H1 (cell line): ENCODE measurements at regions of chr6 and their contacts with region 1.

Region 1: DNA sequence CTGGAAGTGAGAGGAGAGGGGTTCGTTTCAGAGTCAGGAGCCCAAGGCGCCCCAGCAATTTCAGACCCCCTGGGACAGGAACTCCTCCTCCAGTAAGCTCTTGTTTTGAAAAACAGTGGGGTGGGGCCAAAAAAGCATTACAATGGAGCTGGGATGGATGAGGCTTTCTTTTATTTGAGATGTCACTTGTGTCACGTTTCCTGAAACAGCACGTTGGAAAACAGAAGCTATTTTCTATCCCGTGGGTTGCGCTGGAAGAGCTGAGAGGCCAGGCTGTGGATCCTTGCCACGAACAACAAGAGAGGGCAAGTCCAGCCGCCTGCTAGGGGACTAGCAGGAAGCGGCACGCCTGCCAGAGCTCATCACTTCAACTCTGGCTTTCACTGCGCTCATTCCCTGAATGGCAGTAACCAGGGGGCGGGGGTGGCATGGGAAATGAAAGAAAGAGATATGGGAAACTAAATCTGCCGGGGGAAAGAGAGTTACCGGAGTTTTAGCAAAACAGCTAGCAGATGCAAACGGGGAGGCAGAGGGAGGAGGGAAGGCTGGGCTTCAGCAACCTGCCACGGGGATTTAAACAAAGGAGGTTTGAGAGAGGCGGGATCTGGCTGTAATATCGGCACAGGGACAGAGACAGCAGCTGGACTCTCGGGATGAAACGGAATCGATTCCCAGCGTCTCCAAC is 34.6 kb downstream of the GCNT2 start:
- DNase-seq: peak; percentile 56 to 70
- H3K4me3 ChIP-seq: peak overlapping the region; percentile 81 to 96 (median 87)
- H3K27ac ChIP-seq: peak overlapping the region; percentile 83
- H3K4me1 ChIP-seq: peaks cover 2 to 12% (median 5%) of the 10 kb centered on the region in 4 experiments; a peak in 6 of 7 replicates
- H3K27me3 ChIP-seq: no peaks in the 10 kb centered on the region
- CTCF ChIP-seq: no peak
- EP300 ChIP-seq: no peak
- POLR2A ChIP-seq: peak; percentile 7 to 69; a peak in 2 of 3 replicates
- RAD21 ChIP-seq: no peak

Region 2: DNA sequence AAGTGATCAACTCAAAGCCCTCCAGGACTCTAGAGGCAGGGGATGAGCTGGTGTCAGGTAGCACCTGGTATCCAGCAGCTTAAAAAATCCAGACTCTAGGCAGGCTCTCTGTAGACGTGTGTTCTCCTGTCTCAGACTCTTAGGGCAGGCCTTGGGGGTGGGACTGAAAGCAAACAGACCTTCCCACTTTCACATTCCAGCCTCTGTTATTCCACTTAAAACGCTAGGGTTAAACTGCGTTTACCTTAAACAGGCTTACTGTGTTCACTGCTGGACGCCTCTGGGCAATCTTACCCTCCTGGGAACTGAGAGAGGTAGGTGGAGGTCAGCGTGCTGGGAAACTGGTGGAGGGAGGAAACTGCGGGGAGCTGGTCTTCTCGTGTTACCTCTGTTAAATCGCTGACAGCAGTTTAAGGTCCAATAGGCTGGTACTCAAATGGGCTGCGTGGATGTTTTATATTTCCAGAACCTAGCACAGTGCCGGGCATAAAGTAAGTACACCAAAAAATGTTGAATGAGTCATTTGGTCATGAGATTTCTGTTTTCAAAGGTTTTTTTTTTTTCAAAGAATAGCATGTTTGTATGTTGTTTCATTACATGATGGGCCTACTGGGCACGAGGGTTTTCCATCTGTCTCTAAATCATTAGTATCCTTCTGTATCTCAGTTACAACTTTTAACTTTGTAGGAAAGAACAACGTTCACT is 34.5 kb before region 1 on chr6 and contains the start of gene GCNT2:
- CTCF ChIA-PET with region 1: interaction called, 8 read pairs
- POLR2A ChIA-PET with region 1: interaction called, 51 read pairs
- DNase-seq: peak; percentile 59 to 78
- H3K4me3 ChIP-seq: peak within 1 kb of the TSS in 3 of 4 experiments; percentile 26 to 41 (median 35); a peak in 5 of 8 replicates
- H3K27ac ChIP-seq: peak within 1 kb of the TSS; percentile 1
- H3K4me1 ChIP-seq: peaks cover 10 to 30% (median 20%) of the 10 kb centered on the region in 4 experiments
- H3K27me3 ChIP-seq: no peaks in the 10 kb centered on the region
- CTCF ChIP-seq: no peak
- EP300 ChIP-seq: peak in 1 of 2 experiments; percentile 74; a peak in 1 of 3 replicates
- POLR2A ChIP-seq: peak; percentile 33 to 37; a peak in 2 of 3 replicates
- RAD21 ChIP-seq: peak in 1 of 2 experiments; percentile 11; a peak in 1 of 4 replicates
- total RNA-seq, gene GCNT2: 52.5 and 54.3 TPM in 2 replicates

Region 3: GRCh38 chr6:10567256-10568026 is 11.7 kb after region 1 on chr6:
- CTCF ChIA-PET with region 1: interaction called, 8 read pairs
- POLR2A ChIA-PET with region 1: interaction called, 154 read pairs
- DNase-seq: no peak
- H3K4me3 ChIP-seq: no peak overlapping the region
- H3K27ac ChIP-seq: no peak overlapping the region
- H3K4me1 ChIP-seq: peaks cover 0 to 10% (median 1%) of the 10 kb centered on the region in 4 experiments; a peak in 4 of 7 replicates
- H3K27me3 ChIP-seq: no peaks in the 10 kb centered on the region
- CTCF ChIP-seq: no peak
- EP300 ChIP-seq: no peak
- POLR2A ChIP-seq: no peak
- RAD21 ChIP-seq: no peak

Region 4: DNA sequence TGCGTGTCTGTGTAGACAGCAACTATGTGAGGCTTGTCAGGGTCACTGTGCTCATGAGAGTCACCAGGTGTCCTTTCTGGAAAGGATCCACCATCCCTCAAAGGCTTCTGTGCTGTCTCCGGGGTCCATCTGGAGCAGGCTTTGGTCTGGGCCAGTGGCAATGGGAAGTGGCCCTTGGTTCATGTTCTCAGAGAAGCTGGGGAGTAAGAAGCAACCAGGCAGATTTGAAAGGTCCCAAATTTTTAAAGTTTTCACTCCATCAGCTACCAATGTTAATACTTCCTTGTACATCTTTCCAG is 33.6 kb after region 1 on chr6:
- CTCF ChIA-PET with region 1: interaction called, 4 read pairs
- POLR2A ChIA-PET with region 1: interaction called, 23 read pairs
- DNase-seq: no peak
- H3K4me3 ChIP-seq: no peak overlapping the region
- H3K27ac ChIP-seq: 0 out of 2 replicates have a peak overlapping the region, but pooled peaks have one; percentile 36
- H3K4me1 ChIP-seq: peaks cover 17 to 55% (median 44%) of the 10 kb centered on the region in 4 experiments
- H3K27me3 ChIP-seq: no peaks in the 10 kb centered on the region
- CTCF ChIP-seq: no peak
- EP300 ChIP-seq: no peak
- POLR2A ChIP-seq: no peak
- RAD21 ChIP-seq: no peak

Region 5: DNA sequence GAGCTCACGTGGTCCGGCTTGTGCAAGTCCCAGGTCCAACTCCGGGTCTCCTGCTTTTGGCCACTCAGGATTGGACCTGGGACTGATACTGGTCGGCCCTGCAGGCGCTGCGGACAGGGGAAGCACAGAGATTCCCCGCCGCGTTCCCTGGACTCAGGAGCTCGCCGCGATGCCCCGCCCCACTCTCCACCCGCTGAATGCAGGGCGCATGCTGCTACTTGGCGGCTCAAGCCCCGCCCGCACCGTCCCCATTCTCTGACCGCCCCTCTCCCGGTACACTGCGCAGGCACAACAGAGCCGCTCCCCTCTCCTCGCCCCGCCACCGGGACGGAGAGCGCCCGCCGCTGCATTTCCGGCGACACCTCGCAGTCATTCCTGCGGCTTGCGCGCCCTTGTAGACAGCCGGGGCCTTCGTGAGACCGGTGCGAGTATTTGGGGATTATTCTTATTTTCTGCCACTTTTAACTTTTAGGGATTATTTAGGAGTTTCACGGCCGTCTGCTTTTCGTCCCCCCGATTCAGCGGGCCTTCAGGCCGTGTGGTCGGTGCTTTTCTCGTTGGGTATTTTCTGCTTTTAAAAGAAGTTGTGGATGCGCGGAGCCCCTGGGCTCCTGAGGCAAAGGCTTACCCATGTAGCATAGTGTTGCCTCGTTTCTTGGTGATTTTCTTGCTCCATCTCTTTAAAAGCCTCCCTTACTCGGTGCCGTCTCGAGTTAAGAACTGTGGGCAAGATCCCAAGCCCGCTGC is 167.2 kb after region 1 on chr6 and contains the start of gene TMEM14C:
- CTCF ChIA-PET with region 1: no interaction called
- POLR2A ChIA-PET with region 1: no interaction called
- DNase-seq: peak; percentile 95 to 98
- H3K4me3 ChIP-seq: peak within 1 kb of the TSS; percentile 80 to 91 (median 88)
- H3K27ac ChIP-seq: peak within 1 kb of the TSS; percentile 65
- H3K4me1 ChIP-seq: peaks cover 0 to 12% (median 4%) of the 10 kb centered on the region in 4 experiments; a peak in 3 of 7 replicates
- H3K27me3 ChIP-seq: no peaks in the 10 kb centered on the region
- CTCF ChIP-seq: no peak
- EP300 ChIP-seq: 0 out of 3 replicates have a peak, but pooled peaks of 1 of the 2 experiments have one; percentile 36
- POLR2A ChIP-seq: peak in 1 of 2 experiments; percentile 83; a peak in 2 of 3 replicates
- RAD21 ChIP-seq: peak in 1 of 2 experiments; percentile 6; a peak in 3 of 4 replicates
- total RNA-seq, gene TMEM14C: 111 and 116 TPM in 2 replicates